ENCODE measurements at regions of chr5 and their contacts with region 1.

Region 1: DNA sequence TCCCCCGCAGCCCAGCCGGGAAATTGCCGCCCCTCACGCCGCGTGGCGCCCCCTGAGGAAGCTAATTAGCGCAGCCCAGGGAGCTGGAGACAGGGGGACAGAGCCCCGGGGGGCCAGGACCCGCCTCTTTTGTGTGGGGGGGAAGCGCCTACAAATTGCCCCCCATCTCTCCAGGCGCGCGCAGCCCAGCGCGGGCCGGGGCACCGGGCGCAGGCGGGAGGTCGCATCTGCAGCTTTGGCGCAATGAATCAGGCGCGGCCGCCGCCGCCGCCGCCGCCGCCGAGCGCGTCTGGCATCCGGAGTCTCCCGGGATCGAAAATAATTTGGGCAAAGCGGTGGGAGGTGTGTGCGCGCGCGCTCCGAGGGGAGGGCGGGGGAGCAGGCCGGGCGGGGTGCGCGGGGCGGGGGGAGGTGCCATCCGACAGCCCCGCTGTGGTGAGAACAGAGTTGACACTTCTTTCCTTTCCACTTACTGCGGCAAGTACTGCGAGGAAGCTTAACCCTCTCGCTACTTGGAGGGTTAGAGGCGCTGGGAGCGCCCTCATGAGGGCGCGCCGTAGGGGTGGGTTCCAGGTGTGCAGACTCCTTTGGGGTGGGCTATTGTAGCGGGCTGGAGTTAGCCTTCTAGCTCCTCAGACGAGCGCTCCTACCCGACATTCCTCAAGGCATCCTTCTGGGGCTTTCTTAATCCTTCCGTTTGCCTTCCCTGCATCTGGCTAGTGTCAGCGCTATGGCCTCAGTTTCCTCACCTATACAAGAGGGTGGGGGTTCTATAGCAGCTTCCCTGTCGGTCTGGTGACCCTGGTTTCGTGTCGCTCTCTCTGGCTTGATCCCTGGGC is 63.1 kb downstream of the CXXC5 start:
- DNase-seq: no peak
- H3K4me3 ChIP-seq: peak overlapping the region; percentile 59
- CTCF ChIP-seq: peak; percentile 16

Region 2: DNA sequence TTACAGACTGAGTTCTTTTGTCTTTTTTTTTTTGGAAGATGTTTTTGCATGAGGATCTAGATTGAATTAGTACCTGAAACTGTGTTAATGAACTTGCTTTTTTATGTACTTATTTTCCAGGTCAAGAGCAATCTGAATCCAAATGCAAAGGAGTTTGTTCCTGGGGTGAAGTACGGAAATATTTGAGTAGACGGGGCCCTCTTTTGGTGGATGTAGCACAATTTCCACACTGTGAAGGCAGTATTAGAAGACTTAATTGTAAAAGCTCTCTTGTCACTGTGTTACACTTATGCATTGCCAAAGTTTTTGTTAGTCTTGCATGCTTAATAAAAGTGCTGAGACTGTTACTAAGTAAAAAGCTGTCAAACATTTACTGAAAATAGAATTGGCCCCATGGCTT is 342.7 kb before region 1 on chr5:
- CTCF ChIA-PET with region 1: no interaction called
- POLR2A ChIA-PET with region 1: no interaction called
- DNase-seq: no peak
- H3K4me3 ChIP-seq: no peak overlapping the region
- CTCF ChIP-seq: no peak

Region 3: GRCh38 chr5:139696894-139697658 is 14.2 kb before region 1 on chr5:
- CTCF ChIA-PET with region 1: interaction called, 21 read pairs
- POLR2A ChIA-PET with region 1: interaction called, 13 read pairs
- DNase-seq: peak; percentile 78
- H3K4me3 ChIP-seq: peak overlapping the region; percentile 41
- CTCF ChIP-seq: no peak

Region 4: DNA sequence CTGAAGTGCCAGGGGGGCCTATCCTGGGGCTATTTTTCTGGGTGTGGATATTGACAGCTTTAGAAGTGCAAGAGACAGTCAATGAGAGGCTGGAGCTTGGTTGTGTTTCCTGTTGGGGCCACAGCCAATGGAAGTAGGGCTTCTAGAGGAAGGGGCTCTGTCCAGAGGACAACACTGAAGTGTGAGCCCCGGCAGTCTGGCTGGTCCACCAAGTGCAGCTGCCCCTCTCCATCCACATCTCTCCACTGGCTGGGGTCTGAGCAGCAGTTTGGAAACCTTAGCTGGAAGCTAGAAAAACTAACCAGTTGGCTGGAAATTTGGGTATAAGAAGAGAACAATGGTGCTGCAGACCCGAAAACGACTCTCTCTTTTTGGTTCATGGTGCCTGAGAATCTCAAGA is 20.0 kb after region 1 on chr5:
- CTCF ChIA-PET with region 1: interaction called, 12 read pairs
- POLR2A ChIA-PET with region 1: no interaction called
- DNase-seq: no peak
- H3K4me3 ChIP-seq: no peak overlapping the region
- CTCF ChIP-seq: no peak